ENCODE measurements at regions of chr7 and their contacts with region 1.

Region 1: GRCh38 chr7:25259587-25260243 is 31.4 kb upstream of the NPVF start:
- DNase-seq: no peak
- ATAC-seq: peak; percentile 77

Region 2: DNA sequence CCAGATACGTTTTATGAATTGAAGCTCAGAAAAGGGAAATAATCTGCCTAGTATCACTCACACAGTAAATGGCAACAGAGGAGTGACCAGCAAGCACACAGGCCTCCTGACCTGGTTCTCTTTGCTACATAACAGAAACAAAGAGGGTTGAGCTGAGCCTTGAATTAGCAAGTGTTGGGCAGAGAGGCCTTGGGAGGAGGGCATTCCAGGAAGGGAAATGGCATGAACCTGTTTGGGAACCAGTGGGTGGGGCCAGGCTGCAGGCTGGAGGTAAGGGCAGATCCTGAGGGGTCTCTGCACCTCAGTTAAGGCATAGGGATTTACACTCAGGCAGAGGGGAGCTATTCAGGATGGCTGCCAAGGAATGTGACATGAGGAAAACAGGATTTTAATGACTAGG is 109.9 kb before region 1 on chr7:
- intact Hi-C with region 1: no loop called
- DNase-seq: no peak
- ATAC-seq: no peak

Region 3: DNA sequence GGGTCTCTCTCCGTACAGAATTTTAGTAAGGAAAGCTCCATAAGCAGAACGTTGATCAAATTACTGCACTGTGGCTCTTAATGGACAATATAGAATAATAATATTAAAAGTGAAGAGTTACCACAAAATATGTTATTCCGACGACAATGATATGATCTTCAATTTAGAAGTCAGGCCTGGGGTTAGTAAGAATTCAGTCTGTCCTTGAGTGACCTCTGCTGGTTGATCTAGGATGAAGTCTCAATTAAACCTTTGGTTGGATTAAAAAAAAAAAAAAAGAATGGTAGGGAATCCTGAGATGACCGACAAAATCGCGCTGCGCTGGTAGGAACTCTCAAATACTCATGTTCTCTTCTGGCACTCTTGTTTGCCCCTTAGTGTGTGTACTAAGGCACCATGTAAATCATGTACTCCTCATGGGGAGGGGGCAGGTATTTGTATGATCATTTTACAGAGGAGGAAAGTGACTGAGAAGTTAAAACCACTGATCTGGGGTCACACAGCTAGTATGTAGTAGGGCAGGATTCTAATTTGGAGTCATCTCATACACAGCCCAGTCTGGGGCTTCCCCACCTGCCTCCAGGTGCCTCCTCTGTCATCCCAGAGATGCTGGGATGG is 129.9 kb after region 1 on chr7:
- intact Hi-C with region 1: loop called (anchors 1 kb)
- DNase-seq: no peak
- ATAC-seq: peak; percentile 27

Region 4: GRCh38 chr7:25552998-25553397 is 293.3 kb after region 1 on chr7:
- intact Hi-C with region 1: loop called (anchors 5 kb)
- DNase-seq: no peak
- ATAC-seq: peak; percentile 61

Region 5: DNA sequence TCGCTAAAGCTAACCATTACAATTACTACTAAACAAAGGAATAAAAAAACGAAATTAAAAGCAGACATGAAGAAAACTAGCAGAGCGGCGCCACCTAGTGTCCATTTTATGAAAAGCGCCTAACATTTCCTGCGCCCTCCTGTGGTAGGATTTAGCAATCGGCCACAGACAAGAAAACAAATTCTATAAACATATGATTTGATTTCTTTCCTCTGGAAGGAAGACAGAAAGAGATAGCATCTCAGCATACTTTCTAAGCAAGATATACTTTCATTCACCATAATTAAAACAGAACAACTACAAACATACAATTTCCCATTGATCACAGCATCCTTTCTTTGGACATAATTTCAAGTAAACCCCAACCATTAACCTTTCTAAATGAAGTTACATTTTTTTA is 306.2 kb after region 1 on chr7:
- intact Hi-C with region 1: loop called (anchors 2 kb)
- DNase-seq: peak; percentile 73
- ATAC-seq: no peak

Region 6: GRCh38 chr7:25851332-25852210 is 591.9 kb after region 1 on chr7:
- intact Hi-C with region 1: loop called (anchors 2 kb)
- DNase-seq: peak; percentile 85
- ATAC-seq: peak; percentile 73

Measured in Right ventricle myocardium inferior (tissue), 1 donor.